ENCODE measurements at regions of chr13 and their contacts with region 1.

Region 1: DNA sequence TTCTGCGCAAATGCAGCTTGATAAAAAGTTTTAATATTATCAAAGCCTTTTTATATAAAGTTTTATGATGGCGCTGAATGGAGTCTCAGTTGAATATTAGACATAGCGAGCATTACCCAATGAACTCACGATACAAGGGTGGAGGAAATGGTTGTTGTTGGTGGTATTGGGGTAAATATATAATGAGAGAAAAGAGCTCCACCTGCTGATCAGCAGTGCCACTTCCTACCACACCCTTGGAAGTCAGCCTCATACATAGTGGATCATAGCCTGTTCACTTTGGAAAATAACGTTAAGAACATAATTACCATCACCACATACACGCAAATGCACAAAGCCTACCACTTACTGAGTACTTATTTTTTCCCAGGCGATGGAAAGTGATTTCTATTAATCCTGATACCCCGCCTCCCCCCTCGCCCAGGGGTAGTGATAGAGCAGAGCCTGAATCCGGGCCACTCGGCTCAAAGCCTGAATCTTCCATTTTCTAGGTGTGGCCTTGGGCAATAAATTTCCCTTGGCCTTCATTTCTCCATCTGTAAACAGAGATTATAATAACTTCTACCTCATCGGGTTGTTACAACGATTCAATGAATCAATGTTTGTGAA is 358.3 kb downstream of the KLF5 start:
- DNase-seq: peak; percentile 53
- H3K4me3 Mint-ChIP-seq: no peak overlapping the region
- H3K27ac Mint-ChIP-seq: no peak overlapping the region
- H3K4me1 Mint-ChIP-seq: peaks cover 25% of the 10 kb centered on the region
- H3K27me3 Mint-ChIP-seq: no peaks in the 10 kb centered on the region
- CTCF ChIP-seq: peak; percentile 25

Region 2: DNA sequence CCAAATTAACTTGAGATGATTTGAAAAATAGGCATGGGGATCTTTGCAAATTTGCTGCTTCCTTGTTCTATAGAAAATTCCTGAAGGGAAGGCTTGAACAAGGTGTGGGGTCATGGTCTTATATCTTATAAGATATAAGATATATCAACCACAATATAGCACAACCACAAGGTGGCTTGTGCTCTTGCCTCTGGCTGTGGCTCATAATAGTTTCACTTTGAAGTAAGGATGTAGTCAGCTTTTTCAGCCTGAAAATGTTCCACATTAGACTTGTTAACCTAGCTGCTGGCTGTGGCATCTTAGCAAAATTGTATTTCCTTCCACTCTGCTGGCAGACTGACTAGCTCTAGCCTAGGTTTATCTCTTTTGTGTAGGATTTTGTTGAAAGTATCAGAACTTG is 188.6 kb before region 1 on chr13:
- CTCF ChIA-PET with region 1: no interaction called
- POLR2A ChIA-PET with region 1: no interaction called
- intact Hi-C with region 1: loop called (anchors 5 kb)
- DNase-seq: peak; percentile 32
- H3K4me3 Mint-ChIP-seq: no peak overlapping the region
- H3K27ac Mint-ChIP-seq: no peak overlapping the region
- H3K4me1 Mint-ChIP-seq: peaks cover 19% of the 10 kb centered on the region
- H3K27me3 Mint-ChIP-seq: no peaks in the 10 kb centered on the region
- CTCF ChIP-seq: peak; percentile 12

Region 3: GRCh38 chr13:73433890-73434289 is 16.8 kb after region 1 on chr13:
- CTCF ChIA-PET with region 1: interaction called, 3 read pairs
- POLR2A ChIA-PET with region 1: interaction called, 18 read pairs
- intact Hi-C with region 1: no loop called
- DNase-seq: no peak
- H3K4me3 Mint-ChIP-seq: no peak overlapping the region
- H3K27ac Mint-ChIP-seq: peak overlapping the region; percentile 87
- H3K4me1 Mint-ChIP-seq: peaks cover 32% of the 10 kb centered on the region
- H3K27me3 Mint-ChIP-seq: no peaks in the 10 kb centered on the region
- CTCF ChIP-seq: no peak

Region 4: GRCh38 chr13:73598021-73598712 is 181.0 kb after region 1 on chr13:
- CTCF ChIA-PET with region 1: no interaction called
- POLR2A ChIA-PET with region 1: no interaction called
- intact Hi-C with region 1: loop called (anchors 2 kb)
- DNase-seq: peak; percentile 86
- H3K4me3 Mint-ChIP-seq: no peak overlapping the region
- H3K27ac Mint-ChIP-seq: peak overlapping the region; percentile 92
- H3K4me1 Mint-ChIP-seq: peaks cover 33% of the 10 kb centered on the region
- H3K27me3 Mint-ChIP-seq: no peaks in the 10 kb centered on the region
- CTCF ChIP-seq: no peak

Measured in MCF 10A (cell line).